Astrocyte of the cerebellum (primary cell): ENCODE measurements at regions of chr3 and their contacts with region 1.

Region 1: GRCh38 chr3:142578327-142579223 is at the start of gene ATR:
- DNase-seq: peak; percentile 87
- H3K4me3 ChIP-seq: peak within 1 kb of the TSS; percentile 96
- CTCF ChIP-seq: no peak

Region 2: DNA sequence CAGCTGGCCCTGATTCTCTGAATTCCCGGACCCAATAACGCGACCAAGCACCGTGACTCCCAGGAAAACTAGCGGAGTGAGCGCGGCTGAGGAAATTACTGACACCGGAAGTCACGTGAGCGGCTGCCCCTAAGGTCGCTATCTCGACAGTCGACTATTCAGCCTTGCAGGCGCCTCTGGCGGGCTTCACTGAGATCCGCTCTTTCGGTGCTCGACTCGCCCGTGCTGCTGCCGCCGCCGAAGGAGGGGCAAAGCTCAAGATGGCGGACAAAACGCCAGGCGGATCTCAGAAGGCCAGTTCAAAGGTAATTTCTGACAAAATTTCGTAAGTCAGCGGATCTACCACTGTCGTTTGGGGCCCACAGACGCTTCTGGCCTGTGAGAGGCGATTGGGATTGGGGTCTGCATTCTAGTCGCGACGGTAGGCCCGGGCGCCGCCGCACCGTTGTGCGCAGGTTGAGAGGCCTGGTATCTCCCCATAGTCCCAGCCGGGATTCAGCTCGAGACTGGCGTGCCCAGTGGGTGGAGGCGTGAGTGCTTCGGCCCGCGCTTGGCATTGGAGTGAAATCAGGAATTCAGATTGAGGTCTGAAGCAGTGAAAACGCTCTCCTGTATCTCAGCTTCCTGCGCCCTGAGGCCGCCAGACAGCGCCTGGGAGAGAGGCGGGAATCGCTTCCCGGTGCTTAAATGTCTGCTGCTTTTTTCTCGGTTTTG is 423.0 kb after region 1 on chr3 and contains the start of gene U2SURP:
- in situ Hi-C with region 1: loop called (anchors 25 kb)
- DNase-seq: peak; percentile 97
- H3K4me3 ChIP-seq: peak within 1 kb of the TSS; percentile 98
- CTCF ChIP-seq: no peak